Mammary epithelial cell (primary cell): ENCODE measurements at regions of chr5 and their contacts with region 1.

Region 1: GRCh38 chr5:72470826-72471225 is 36.4 kb downstream of the ZNF366 start:
- DNase-seq: peak; percentile 85
- H3K4me3 ChIP-seq: no peak overlapping the region
- H3K27ac ChIP-seq: peak overlapping the region; percentile 65
- H3K4me1 ChIP-seq: peaks cover 49% of the 10 kb centered on the region
- H3K27me3 ChIP-seq: no peaks in the 10 kb centered on the region
- CTCF ChIP-seq: no peak

Region 2: GRCh38 chr5:72408602-72409001 is 62.2 kb before region 1 on chr5:
- CTCF ChIA-PET with region 1: no interaction called
- dilution Hi-C with region 1: no loop called
- in situ Hi-C with region 1: no loop called
- intact Hi-C with region 1: loop called (anchors 5 kb)
- DNase-seq: no peak
- H3K4me3 ChIP-seq: no peak overlapping the region
- H3K27ac ChIP-seq: no peak overlapping the region
- H3K4me1 ChIP-seq: no peaks in the 10 kb centered on the region
- H3K27me3 ChIP-seq: no peaks in the 10 kb centered on the region
- CTCF ChIP-seq: no peak